ENCODE measurements at regions of chr4 and their contacts with region 1.

Region 1: DNA sequence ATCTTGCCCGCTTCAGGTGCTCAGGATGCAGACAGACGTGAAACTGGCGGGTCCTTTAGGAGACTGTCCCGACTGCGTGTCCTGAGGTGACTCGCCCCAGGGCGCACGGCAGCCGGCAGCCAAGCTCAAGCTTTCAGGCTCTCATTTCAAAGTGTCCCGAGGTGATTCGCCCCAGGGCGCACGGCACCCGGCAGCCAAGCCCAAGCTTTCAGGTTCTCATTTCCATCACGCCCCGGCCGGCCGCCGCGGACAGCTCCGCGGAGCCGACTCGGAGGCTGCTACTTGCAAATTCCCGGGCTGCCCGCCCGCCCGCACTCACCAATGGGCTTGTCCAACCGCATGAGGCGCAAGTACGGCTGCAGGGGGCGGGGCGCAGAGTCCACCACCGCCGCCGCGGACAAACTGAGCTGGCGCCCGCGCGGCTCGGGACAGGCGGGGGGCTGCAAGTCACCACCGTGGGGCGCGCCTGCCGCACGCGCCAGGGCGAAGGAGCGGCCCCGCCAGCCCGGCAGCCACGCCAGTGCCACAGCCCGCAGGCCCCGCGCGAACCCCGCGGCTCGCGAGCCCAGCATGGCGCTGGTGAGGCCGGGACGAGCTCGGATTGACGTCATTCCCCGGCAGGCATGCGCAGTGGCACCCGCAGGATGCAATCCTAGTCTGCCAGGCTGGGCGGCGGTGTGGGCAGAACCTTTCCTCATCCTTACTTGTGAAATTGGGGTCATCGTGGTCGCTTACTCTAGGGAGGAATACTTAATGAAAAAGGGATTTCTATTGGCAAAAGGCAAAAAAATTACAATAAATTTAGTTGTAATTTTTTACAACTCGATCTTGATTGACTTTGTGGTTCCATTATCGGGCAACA is at the start of gene COQ2:
- DNase-seq: peak; percentile 98
- H3K4me3 Mint-ChIP-seq: peak within 1 kb of the TSS; percentile 93
- H3K27ac Mint-ChIP-seq: peak within 1 kb of the TSS; percentile 96
- H3K4me1 Mint-ChIP-seq: peaks cover 31% of the 10 kb centered on the region
- H3K27me3 Mint-ChIP-seq: no peaks in the 10 kb centered on the region
- total RNA-seq, gene COQ2: 20.5 and 20.7 TPM in 2 replicates

Region 2: DNA sequence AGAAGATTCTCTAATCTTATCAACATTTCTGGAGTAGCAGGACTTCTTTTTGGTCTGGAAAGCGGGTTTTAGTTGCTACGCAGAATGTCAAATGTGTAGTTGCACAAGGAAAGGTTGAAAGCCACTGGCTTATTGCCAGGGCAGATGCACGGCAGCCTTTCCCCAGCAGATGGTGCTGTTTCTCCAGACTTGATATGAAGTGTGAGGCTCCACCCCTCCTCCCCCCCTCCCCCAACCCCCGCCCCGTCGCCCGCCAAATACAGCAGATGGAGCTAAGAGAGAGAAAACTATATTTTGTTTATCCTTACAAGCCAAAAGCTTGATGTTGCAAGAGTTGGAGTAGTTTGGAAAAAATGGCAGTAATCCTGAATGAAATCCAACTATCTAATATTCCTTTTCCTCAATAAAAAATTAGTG is 822.0 kb before region 1 on chr4:
- intact Hi-C with region 1: loop called (anchors 5 kb)
- DNase-seq: peak; percentile 95
- H3K4me3 Mint-ChIP-seq: no peak overlapping the region
- H3K27ac Mint-ChIP-seq: no peak overlapping the region
- H3K4me1 Mint-ChIP-seq: peaks cover 4% of the 10 kb centered on the region
- H3K27me3 Mint-ChIP-seq: no peaks in the 10 kb centered on the region

Region 3: GRCh38 chr4:83012687-83013419 is 271.6 kb before region 1 on chr4:
- intact Hi-C with region 1: loop called (anchors 2 kb)
- DNase-seq: peak; percentile 99
- H3K4me3 Mint-ChIP-seq: peak overlapping the region; percentile 92
- H3K27ac Mint-ChIP-seq: peak overlapping the region; percentile 89
- H3K4me1 Mint-ChIP-seq: peaks cover 40% of the 10 kb centered on the region
- H3K27me3 Mint-ChIP-seq: peaks cover 1% of the 10 kb centered on the region

Region 4: GRCh38 chr4:83217721-83218522 is 66.5 kb before region 1 on chr4:
- intact Hi-C with region 1: loop called (anchors 5 kb)
- DNase-seq: peak; percentile 92
- H3K4me3 Mint-ChIP-seq: peak overlapping the region; percentile 69
- H3K27ac Mint-ChIP-seq: peak overlapping the region; percentile 83
- H3K4me1 Mint-ChIP-seq: peaks cover 66% of the 10 kb centered on the region
- H3K27me3 Mint-ChIP-seq: no peaks in the 10 kb centered on the region

Region 5: DNA sequence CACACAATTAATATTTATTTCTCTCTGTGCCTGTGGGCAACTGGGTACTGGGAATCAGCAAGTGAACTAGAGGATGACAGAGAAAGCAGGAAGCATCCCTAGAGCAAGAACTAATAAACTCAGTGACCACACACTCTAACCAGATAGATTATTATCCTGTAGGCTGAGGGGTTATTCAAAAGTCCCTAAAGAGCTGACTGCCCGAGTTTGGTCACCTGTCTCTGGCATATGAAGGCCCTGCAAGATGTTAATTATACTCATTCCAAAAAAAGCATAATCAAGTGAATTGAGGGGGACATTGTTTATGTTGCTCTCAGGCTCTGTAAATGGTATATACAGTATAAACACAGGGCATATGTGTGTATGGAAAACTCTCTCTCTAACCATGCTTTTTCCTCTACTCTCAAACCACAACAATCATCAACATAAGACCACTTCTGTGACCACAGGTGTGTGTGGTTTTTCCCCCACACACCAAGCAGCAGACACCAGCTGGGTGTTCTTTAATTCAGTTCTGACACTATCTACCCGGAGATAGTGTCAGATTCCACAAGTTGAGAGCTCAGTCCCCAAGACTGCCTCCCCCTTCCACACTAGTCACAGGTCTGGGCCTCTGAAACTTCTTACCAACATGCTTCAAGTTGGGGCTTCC is 56.4 kb after region 1 on chr4:
- intact Hi-C with region 1: loop called (anchors 1 kb)
- DNase-seq: peak; percentile 87
- H3K4me3 Mint-ChIP-seq: peak overlapping the region; percentile 50
- H3K27ac Mint-ChIP-seq: peak overlapping the region; percentile 93
- H3K4me1 Mint-ChIP-seq: peaks cover 25% of the 10 kb centered on the region
- H3K27me3 Mint-ChIP-seq: peaks cover 26% of the 10 kb centered on the region

Region 6: DNA sequence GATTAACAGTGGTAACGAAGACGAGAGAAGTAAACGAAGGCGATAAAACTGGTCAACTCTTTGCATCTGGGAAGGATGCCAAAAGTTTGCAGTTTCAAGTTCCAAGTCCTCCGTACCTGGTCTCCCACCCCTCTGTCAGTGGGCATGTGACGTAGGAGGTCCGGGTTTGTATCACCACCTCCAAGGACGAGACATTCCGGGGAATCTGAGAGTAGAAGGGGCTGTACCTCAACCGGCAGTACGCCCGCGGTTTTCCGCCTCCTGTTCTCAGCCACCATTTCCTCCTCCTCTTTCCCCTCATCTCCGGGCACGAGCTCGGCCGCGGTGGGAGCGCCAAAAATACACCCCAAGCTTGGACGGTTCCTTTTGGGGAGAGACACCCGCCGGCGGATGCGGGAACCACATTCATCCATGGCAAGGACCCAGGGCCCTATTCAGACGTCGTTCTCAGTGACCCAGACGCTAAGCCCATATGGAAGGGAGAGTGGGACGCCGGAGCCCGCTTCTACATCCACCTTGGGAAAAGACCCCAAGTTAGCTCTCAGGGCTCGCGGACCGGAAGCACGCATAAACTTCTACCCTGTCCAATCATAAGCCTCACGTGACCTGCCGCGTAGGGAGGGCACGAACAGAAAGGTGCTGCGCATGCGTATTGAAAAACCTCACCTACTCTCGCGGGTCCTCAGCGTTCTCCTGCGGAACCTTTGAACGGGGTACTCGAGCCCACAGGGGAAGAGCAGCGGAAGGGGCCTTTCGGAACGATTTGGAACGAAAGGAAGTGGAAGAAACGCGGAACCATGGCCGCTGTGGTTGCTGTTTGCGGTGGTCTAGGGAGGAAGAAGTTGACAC is 171.1 kb after region 1 on chr4 and contains the starts of genes HELQ and MRPS18C:
- intact Hi-C with region 1: loop called (anchors 1 kb)
- DNase-seq: peak; percentile 98
- H3K4me3 Mint-ChIP-seq: peak within 1 kb of the TSS; percentile 99
- H3K27ac Mint-ChIP-seq: peak within 1 kb of the TSS; percentile 100
- H3K4me1 Mint-ChIP-seq: peaks cover 26% of the 10 kb centered on the region
- H3K27me3 Mint-ChIP-seq: no peaks in the 10 kb centered on the region
- total RNA-seq, gene HELQ: 9.1 and 11.4 TPM in 2 replicates
- total RNA-seq, gene MRPS18C: 83.9 and 86.6 TPM in 2 replicates

Measured in activated CD4-positive, alpha-beta T cell treated with anti-CD3 and anti-CD28 coated beads, Interleukin-2, amount 10 ng/mL, durations not matched to agents 24 days and 14 days (primary cell).